HEK293 (cell line): ENCODE measurements at regions of chr7 and their contacts with region 1.

Region 1: GRCh38 chr7:129664029-129665012 is 52.8 kb downstream of the NRF1 start:
- H3K4me3 ChIP-seq: no peak overlapping the region
- H3K27ac ChIP-seq: no peak overlapping the region
- H3K4me1 ChIP-seq: no peaks in the 10 kb centered on the region
- CTCF ChIP-seq: peak; percentile 37; the same call in 1 of the 2 replicates

Region 2: DNA sequence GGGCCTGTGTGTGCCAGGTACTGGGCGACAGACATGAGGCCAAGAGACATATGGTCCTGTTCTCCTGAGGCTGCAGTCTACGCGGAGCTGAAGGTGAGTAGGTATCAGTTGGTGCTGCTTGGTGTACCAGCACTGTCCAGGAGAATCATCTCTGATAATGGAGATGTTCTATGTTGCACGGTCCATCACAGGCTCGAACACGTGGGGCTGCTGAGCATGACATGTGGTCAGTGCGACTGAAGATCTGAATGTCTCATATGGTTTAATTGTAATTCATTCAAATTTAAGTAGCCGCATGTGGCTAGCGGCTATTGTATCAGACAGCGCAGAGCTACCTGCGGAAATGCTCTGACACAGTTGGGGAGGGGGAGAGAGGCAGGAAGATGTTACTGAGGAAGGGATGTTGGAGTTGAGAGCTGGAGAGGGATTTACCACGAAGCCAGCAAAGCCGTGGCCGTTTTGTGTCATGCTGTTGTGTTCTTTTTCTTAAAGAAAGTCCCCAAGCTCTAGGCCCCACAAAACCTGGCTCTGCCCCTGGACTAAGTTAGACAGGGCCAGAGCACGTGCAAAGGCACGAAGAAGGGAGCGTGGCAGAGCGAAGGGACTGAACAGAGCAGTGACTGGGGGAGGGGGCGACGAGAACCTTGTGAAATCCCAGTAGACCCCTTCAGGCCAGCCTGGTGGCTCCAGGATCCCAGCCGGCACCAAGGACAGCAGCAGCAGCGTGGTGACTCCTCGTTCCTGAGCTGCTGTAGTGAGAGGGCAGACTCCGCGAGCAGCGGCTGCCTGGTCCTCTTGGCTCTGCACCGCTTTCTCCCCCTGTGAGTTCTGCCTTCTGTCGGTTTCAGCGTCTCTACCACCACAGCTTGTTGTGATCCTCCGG is 142.0 kb before region 1 on chr7:
- CTCF ChIA-PET with region 1: no interaction called
- POLR2A ChIA-PET with region 1: no interaction called
- H3K4me3 ChIP-seq: no peak overlapping the region
- H3K27ac ChIP-seq: no peak overlapping the region
- H3K4me1 ChIP-seq: no peaks in the 10 kb centered on the region
- CTCF ChIP-seq: no peak

Region 3: DNA sequence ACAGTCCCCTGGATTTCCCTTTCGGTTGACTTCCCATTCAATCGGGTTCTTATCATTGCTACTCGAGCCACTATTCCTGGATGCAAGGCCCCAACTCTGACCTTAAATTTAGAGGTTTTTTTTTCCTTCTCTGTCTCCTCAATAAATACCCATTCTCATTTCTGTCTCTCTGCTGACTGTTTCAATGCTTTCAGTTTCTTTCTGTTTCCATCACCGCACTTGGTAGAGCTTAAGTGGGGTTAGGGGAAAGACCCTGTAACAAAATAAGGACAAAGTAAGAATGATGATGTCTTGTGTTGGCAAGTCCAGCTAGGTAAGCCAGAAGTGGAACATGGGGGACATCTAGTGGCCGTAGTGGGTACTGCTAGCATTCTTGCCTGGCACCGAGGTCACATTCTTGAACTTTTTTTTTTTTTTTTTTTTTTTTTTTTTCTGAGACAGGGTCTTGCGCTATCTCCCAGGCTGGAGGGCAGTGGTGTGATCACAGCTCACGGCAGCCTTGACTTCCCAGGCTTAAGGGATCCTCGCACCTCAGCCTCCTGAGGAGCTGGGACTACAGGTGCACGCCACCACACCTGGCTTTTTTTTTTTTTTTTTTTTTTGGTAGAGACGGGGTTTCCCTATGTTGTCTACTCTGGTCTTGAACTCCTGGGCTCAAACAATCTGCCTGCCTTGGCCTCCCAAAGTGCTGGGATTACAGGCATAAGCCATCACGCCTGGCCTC is 346.5 kb after region 1 on chr7:
- CTCF ChIA-PET with region 1: interaction called, 25 read pairs
- POLR2A ChIA-PET with region 1: no interaction called
- H3K4me3 ChIP-seq: no peak overlapping the region
- H3K27ac ChIP-seq: no peak overlapping the region
- H3K4me1 ChIP-seq: no peaks in the 10 kb centered on the region
- CTCF ChIP-seq: peak; percentile 87